Activated T-helper 2 cell treated with anti-CD3 and anti-CD28 coated beads, Interferon-gamma antibody, Interleukin-2, Interleukin-4, amounts not matched to agents 10 μg/mL and 5 μg/mL and 100 μg/mL, durations not matched to agents 14 hours and 24 hours and 36 hours (primary cell): ENCODE measurements at regions of chr16 and their contacts with region 1.

Region 1: GRCh38 chr16:80540516-80541272 is at the start of gene DYNLRB2:
- DNase-seq: peak; percentile 90
- H3K4me3 Mint-ChIP-seq: peak within 1 kb of the TSS; percentile 88
- H3K27ac Mint-ChIP-seq: peak within 1 kb of the TSS; percentile 93
- H3K4me1 Mint-ChIP-seq: peaks cover 28% of the 10 kb centered on the region
- H3K27me3 Mint-ChIP-seq: peaks cover 13% of the 10 kb centered on the region
- total RNA-seq, gene DYNLRB2: not detected in 2 replicates

Region 2: DNA sequence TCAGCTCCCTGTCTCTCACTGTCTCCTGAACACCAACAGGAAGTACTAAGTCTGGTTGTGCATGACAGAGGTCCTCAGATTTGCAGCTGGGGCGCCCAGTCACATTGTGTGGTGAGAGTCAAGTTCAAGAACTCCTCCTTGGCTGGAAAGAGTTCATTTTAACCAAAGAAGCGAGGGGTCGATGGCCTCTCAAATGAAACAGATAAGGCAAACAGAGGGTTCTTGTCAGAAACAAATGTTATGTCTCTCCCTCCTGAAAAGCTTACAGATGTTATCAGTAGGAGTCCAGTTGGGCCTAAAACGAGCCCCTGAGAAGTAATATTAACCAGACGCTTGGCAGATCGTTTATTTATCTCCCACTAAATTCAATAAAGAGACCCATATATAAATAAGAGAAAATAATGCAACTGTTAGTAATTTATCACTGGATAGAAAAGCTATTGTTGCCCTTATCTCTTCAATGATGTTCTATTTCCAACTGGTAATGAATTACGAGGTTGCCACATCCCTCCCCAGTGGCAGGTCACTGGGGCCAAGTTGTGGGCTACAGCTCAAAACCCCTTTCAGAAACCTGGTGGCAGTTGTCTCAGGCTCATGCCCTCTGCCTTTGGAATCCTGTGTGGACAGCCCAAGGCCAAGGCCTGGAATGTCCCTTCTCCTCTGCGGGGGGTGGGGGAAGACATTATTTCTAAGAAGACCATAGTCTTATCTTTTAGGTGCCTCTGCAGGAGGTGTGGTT is 307.4 kb before region 1 on chr16:
- intact Hi-C with region 1: no loop called
- DNase-seq: no peak
- H3K4me3 Mint-ChIP-seq: no peak overlapping the region
- H3K27ac Mint-ChIP-seq: no peak overlapping the region
- H3K4me1 Mint-ChIP-seq: peaks cover 7% of the 10 kb centered on the region
- H3K27me3 Mint-ChIP-seq: no peaks in the 10 kb centered on the region

Region 3: DNA sequence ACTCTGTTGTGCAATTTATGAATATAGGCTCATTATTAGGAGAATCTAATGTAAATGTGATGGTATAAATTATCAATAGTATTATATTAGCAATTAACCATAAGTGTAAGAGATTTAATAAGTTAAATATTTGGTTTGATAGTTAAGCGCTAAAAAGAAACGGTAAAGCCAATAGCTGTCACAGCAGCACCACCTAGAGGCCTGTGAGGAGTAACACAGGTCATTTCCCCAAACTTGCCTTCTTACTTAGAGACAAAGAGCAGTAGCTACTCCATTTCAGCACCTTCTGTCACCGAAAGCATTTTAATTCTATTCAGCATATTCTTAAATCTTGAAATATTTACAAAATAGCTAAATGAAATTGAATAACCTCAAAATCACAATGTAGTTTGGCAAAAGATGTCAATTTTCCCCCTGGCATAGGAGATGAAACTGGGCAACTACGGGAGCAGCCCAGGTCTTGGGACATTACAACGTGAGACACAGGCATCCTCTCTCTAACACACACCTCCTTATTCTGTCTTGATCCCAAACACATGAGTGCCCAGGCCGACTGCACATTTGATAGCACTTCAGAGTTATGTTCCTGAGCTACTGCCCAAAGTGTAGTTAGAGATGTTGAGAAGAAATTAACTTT is 14.2 kb before region 1 on chr16:
- intact Hi-C with region 1: loop called (anchors 1 kb)
- DNase-seq: peak; percentile 35
- H3K4me3 Mint-ChIP-seq: no peak overlapping the region
- H3K27ac Mint-ChIP-seq: no peak overlapping the region
- H3K4me1 Mint-ChIP-seq: peaks cover 8% of the 10 kb centered on the region
- H3K27me3 Mint-ChIP-seq: peaks cover 26% of the 10 kb centered on the region

Region 4: DNA sequence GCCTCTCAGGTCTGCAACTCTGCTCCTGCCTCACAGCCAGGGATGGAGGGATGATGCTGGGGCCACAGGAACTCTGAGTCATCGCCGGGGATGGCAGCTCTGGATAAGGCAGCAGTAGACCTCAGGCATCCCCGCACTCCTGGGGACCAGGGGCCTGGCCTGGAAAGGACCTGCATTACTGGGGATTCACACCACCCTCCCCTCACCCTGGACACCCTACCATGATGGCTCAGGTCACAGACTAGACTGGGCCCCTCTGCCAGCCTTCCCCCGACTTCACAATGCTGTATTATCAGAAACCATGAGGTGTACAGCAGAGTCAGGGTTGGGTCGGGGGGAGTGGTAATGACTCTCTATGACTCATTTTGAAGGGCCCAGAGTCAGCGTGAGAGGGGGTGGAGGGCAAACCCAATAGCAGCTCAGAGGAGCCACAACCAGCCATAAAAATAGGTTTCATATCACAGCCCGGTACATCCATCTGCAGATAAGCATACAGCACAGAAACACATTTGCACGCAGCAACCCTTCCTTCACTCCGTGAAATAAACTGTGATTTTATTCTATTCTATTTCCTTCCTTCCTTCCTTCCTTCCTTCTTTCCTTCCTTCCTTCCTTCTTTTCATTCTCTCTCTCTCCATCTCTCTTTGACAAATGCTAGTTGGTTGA is 28.9 kb after region 1 on chr16:
- intact Hi-C with region 1: loop called (anchors 2 kb)
- DNase-seq: peak; percentile 76
- H3K4me3 Mint-ChIP-seq: peak overlapping the region; percentile 34
- H3K27ac Mint-ChIP-seq: peak overlapping the region; percentile 83
- H3K4me1 Mint-ChIP-seq: peaks cover 42% of the 10 kb centered on the region
- H3K27me3 Mint-ChIP-seq: peaks cover 2% of the 10 kb centered on the region

Region 5: GRCh38 chr16:80759419-80760162 is 218.9 kb after region 1 on chr16:
- intact Hi-C with region 1: loop called (anchors 5 kb)
- DNase-seq: no peak
- H3K4me3 Mint-ChIP-seq: no peak overlapping the region
- H3K27ac Mint-ChIP-seq: peak overlapping the region; percentile 80
- H3K4me1 Mint-ChIP-seq: peaks cover 22% of the 10 kb centered on the region
- H3K27me3 Mint-ChIP-seq: no peaks in the 10 kb centered on the region

Region 6: GRCh38 chr16:80804056-80804450 is 263.4 kb after region 1 on chr16:
- intact Hi-C with region 1: loop called (anchors 1 kb)
- DNase-seq: peak; percentile 53
- H3K4me3 Mint-ChIP-seq: peak overlapping the region; percentile 94
- H3K27ac Mint-ChIP-seq: peak overlapping the region; percentile 90
- H3K4me1 Mint-ChIP-seq: peaks cover 49% of the 10 kb centered on the region
- H3K27me3 Mint-ChIP-seq: no peaks in the 10 kb centered on the region